ENCODE measurements at regions of chr2 and their contacts with region 1.

Region 1: GRCh38 chr2:3827673-3828575 is 124.5 kb downstream of the DCDC2C start:
- DNase-seq: no peak
- ATAC-seq: no peak
- H3K4me3 ChIP-seq: no peak overlapping the region
- H3K27ac ChIP-seq: no peak overlapping the region
- H3K4me1 ChIP-seq: no peaks in the 10 kb centered on the region
- H3K27me3 ChIP-seq: no peaks in the 10 kb centered on the region
- CTCF ChIP-seq: peak in 11 of 12 donors; percentile 32 to 66 (median 53)
- POLR2A ChIP-seq: no peak

Region 2: DNA sequence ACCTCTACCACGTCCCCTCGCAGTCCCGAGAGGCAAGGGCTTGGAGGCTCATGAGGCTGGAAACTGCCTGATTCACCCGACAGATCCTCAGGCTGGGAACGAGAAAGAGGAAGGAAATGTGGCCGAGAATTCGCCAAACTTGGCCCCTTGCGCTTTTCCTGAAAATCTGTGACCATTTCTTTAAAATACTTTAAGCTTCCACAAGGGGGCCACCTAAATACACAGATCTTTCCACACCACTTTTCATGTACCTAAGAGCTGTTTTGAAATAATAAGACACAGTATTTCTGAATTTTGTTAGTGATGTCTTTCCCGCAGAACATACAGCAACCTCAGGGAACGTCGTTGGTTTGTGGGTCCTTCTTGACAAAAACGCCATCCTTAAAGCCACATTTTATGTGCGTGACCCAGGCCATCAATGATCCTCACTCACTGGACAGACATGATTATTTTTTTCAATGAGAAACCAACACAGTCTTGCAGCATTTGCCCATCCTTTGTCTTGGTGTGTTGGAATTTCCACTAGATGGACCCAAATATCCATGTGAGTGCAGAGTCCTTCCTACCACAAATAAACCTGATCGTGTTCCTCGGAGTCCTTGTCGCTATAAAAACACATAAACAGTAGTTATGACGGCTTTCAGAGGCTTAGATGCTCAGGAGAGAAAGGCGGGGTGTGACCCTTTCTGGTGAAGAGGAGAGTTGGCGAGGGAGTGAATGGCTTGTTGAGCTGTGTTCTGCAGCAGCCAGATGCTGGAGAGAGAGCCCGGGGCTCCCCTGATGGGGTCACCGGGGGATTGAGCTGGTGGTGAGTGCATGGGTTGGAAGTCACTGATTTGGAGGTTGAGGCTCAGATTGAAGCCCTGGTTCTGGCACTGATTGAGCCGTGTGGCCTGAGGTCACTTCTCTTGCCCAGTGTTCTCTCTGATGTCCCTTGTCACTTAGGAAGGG is 99.5 kb before region 1 on chr2:
- intact Hi-C with region 1: loop called in 5 of 10 experiments (anchors 5 kb)
- DNase-seq: no peak
- ATAC-seq: peak in 2 of 4 donors; percentile 44 to 54
- H3K4me3 ChIP-seq: peak overlapping the region in 1 of 12 donors; percentile 35
- H3K27ac ChIP-seq: no peak overlapping the region
- H3K4me1 ChIP-seq: peaks cover 0 to 7% (median 4%) of the 10 kb centered on the region in 12 donors
- H3K27me3 ChIP-seq: peaks cover 0 to 26% (median 0%) of the 10 kb centered on the region in 9 donors
- CTCF ChIP-seq: peak; percentile 28 to 70 (median 56)
- POLR2A ChIP-seq: no peak

Measured in heart left ventricle (tissue), 16 donors.